Vagina (tissue), 2 donors: ENCODE measurements at regions of chrX and their contacts with region 1.

Region 1: DNA sequence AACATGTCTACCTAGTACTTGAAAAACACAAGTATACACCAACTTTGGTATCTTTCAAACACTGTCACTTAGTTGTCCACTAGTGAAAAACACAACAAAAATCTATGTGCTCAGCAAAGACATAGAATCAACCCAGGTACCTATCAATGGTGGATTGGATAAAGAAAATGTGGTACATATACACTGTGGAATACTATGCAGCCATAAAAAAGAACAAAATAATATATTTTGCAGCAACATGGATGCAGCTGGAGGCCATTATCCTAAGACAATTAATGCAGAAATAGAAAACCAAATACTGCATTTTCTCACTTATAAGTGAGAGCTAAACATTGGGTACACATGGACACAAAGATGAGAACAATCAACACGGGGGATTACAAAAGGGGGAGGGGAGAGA is 148.7 kb downstream of the ENOX2 start:
- DNase-seq: no peak
- H3K4me3 ChIP-seq: no peak overlapping the region
- H3K27ac ChIP-seq: no peak overlapping the region
- H3K4me1 ChIP-seq: no peaks in the 10 kb centered on the region
- H3K27me3 ChIP-seq: no peaks in the 10 kb centered on the region
- CTCF ChIP-seq: no peak
- POLR2A ChIP-seq: no peak

Region 2: GRCh38 chrX:129043138-129043537 is 1711.2 kb before region 1 on chrX:
- intact Hi-C with region 1: loop called (anchors 5 kb)
- DNase-seq: no peak
- H3K4me3 ChIP-seq: no peak overlapping the region
- H3K27ac ChIP-seq: no peak overlapping the region
- H3K4me1 ChIP-seq: no peaks in the 10 kb centered on the region
- H3K27me3 ChIP-seq: no peaks in the 10 kb centered on the region
- CTCF ChIP-seq: no peak
- POLR2A ChIP-seq: no peak

Region 3: DNA sequence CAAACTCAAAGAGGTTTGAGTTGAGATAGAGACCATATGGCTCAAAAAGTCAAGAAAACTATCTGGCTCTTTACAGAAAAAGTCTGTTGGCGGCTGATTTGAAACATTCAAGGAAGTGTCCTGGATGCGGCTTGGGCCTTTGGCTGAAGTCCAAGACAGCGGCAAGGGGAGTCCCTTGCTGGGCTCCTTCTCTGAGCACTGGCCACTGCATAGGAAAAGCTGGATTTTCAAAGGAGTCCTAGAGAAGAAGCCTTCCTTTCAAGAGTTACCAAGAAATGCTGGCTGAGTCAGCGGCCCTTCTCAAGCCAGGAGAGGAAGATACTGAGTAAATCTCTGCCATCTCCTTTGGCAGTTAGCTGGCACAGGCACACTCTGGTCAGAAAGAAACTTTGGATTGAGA is 1111.7 kb before region 1 on chrX:
- intact Hi-C with region 1: no loop called
- DNase-seq: no peak
- H3K4me3 ChIP-seq: no peak overlapping the region
- H3K27ac ChIP-seq: no peak overlapping the region
- H3K4me1 ChIP-seq: peaks cover under 1% of the 10 kb centered on the region
- H3K27me3 ChIP-seq: no peaks in the 10 kb centered on the region
- CTCF ChIP-seq: no peak
- POLR2A ChIP-seq: no peak